ENCODE measurements at regions of chr1 and their contacts with region 1.

Region 1: GRCh38 chr1:21289700-21290545 is at the start of gene ECE1:
- DNase-seq: peak in 3 of 4 donors; percentile 43 to 63 (median 45)
- ATAC-seq: peak; percentile 51
- H3K4me3 ChIP-seq: peak within 1 kb of the TSS; percentile 31 to 83
- H3K27ac ChIP-seq: peak within 1 kb of the TSS; percentile 45 to 71 (median 69)
- H3K4me1 ChIP-seq: peaks cover 68% of the 10 kb centered on the region
- H3K27me3 ChIP-seq: no peaks in the 10 kb centered on the region
- CTCF ChIP-seq: no peak
- POLR2A ChIP-seq: peak in 1 of 3 donors; percentile 28
- total RNA-seq, gene ECE1: 79.1 to 83.3 TPM

Region 2: DNA sequence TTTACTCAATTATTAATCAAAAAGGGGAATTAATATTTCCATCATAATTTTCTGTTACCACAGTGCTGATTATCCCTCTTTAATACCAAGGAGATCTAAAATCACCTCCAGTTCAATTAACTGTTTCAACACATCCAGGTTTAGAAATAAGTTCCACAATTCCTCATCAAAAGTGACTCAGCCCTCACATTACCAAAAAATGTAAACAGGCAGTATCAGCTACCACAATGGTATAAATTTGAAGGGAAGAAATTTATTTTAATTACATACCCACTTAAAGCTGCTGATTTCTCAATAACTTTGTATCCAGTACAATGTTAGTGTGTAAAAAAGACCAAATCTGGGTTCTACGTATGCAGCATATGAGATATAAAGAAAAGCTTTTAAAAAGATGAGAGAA is 165.1 kb before region 1 on chr1:
- intact Hi-C with region 1: no loop called
- DNase-seq: no peak
- ATAC-seq: no peak
- H3K4me3 ChIP-seq: no peak overlapping the region
- H3K27ac ChIP-seq: no peak overlapping the region
- H3K4me1 ChIP-seq: no peaks in the 10 kb centered on the region
- H3K27me3 ChIP-seq: no peaks in the 10 kb centered on the region
- CTCF ChIP-seq: no peak
- POLR2A ChIP-seq: no peak

Region 3: GRCh38 chr1:21334214-21335087 is 44.5 kb after region 1 on chr1:
- intact Hi-C with region 1: loop called (anchors 10 kb)
- DNase-seq: peak; percentile 65 to 89 (median 86)
- ATAC-seq: peak; percentile 22
- H3K4me3 ChIP-seq: no peak overlapping the region
- H3K27ac ChIP-seq: peak overlapping the region; percentile 83 to 92 (median 88)
- H3K4me1 ChIP-seq: peaks cover 96% of the 10 kb centered on the region
- H3K27me3 ChIP-seq: no peaks in the 10 kb centered on the region
- CTCF ChIP-seq: peak; percentile 53 to 85 (median 64)
- POLR2A ChIP-seq: peak in 2 of 3 donors; percentile 6 to 12

Region 4: GRCh38 chr1:21490774-21491553 is 201.0 kb after region 1 on chr1:
- intact Hi-C with region 1: no loop called
- DNase-seq: peak in 3 of 4 donors; percentile 23 to 42 (median 27)
- ATAC-seq: no peak
- H3K4me3 ChIP-seq: no peak overlapping the region
- H3K27ac ChIP-seq: no peak overlapping the region
- H3K4me1 ChIP-seq: no peaks in the 10 kb centered on the region
- H3K27me3 ChIP-seq: no peaks in the 10 kb centered on the region
- CTCF ChIP-seq: peak in 3 of 7 experiments; percentile 15 to 36 (median 17)
- POLR2A ChIP-seq: no peak